MCF 10A (cell line): ENCODE measurements at regions of chr10 and their contacts with region 1.

Region 1: DNA sequence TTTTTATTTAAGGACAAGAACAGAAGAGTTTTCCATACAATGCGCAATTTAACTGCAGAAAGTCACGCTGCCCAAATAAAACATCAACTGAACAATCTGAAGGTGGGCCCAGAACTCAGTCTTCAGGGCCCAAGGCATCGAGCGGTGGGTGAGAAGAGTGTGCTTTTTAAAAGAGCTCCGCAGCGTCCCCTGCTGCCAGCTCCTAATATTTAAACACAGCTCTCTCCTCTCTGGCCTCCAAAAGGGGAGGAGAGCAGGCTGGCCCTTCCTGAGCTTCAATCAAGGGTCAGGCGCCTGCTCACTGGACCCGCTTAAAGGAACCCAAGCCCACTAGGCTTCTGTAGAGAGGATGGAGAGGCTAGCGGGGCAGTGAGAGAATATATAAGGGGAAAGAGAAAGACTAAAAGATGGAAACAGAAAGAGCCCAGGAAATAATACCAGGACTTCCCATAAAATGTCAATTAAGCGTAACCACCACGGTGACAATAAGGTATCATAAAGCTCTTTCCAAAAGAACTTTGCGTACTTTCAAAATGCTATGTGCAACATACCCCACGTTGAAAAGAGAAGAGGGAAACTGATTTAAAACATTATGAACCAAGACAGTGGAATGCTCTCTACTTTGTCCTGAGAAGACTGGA is 2.8 kb downstream of the FAM53B start:
- DNase-seq: peak; percentile 86
- H3K4me3 Mint-ChIP-seq: peak overlapping the region; percentile 85
- H3K27ac Mint-ChIP-seq: peak overlapping the region; percentile 73
- H3K4me1 Mint-ChIP-seq: peaks cover 48% of the 10 kb centered on the region
- H3K27me3 Mint-ChIP-seq: no peaks in the 10 kb centered on the region
- CTCF ChIP-seq: peak; percentile 79

Region 2: GRCh38 chr10:124530215-124530665 is 211.2 kb before region 1 on chr10:
- CTCF ChIA-PET with region 1: interaction called, 42 read pairs
- POLR2A ChIA-PET with region 1: interaction called, 30 read pairs
- intact Hi-C with region 1: loop called (anchors 1 kb)
- DNase-seq: peak; percentile 86
- H3K4me3 Mint-ChIP-seq: no peak overlapping the region
- H3K27ac Mint-ChIP-seq: no peak overlapping the region
- H3K4me1 Mint-ChIP-seq: peaks cover 13% of the 10 kb centered on the region
- H3K27me3 Mint-ChIP-seq: no peaks in the 10 kb centered on the region
- CTCF ChIP-seq: peak; percentile 91

Region 3: GRCh38 chr10:124545351-124546054 is 195.9 kb before region 1 on chr10:
- CTCF ChIA-PET with region 1: interaction called, 45 read pairs
- POLR2A ChIA-PET with region 1: interaction called, 3 read pairs
- intact Hi-C with region 1: loop called (anchors 1 kb)
- DNase-seq: no peak
- H3K4me3 Mint-ChIP-seq: no peak overlapping the region
- H3K27ac Mint-ChIP-seq: no peak overlapping the region
- H3K4me1 Mint-ChIP-seq: no peaks in the 10 kb centered on the region
- H3K27me3 Mint-ChIP-seq: no peaks in the 10 kb centered on the region
- CTCF ChIP-seq: no peak

Region 4: GRCh38 chr10:124568848-124569622 is 172.4 kb before region 1 on chr10:
- CTCF ChIA-PET with region 1: no interaction called
- POLR2A ChIA-PET with region 1: no interaction called
- intact Hi-C with region 1: no loop called
- DNase-seq: no peak
- H3K4me3 Mint-ChIP-seq: no peak overlapping the region
- H3K27ac Mint-ChIP-seq: no peak overlapping the region
- H3K4me1 Mint-ChIP-seq: no peaks in the 10 kb centered on the region
- H3K27me3 Mint-ChIP-seq: no peaks in the 10 kb centered on the region
- CTCF ChIP-seq: no peak

Region 5: GRCh38 chr10:124647421-124648130 is 93.8 kb before region 1 on chr10:
- CTCF ChIA-PET with region 1: interaction called, 7 read pairs
- POLR2A ChIA-PET with region 1: interaction called, 10 read pairs
- intact Hi-C with region 1: loop called (anchors 5 kb)
- DNase-seq: peak; percentile 52
- H3K4me3 Mint-ChIP-seq: no peak overlapping the region
- H3K27ac Mint-ChIP-seq: no peak overlapping the region
- H3K4me1 Mint-ChIP-seq: peaks cover 26% of the 10 kb centered on the region
- H3K27me3 Mint-ChIP-seq: no peaks in the 10 kb centered on the region
- CTCF ChIP-seq: no peak

Region 6: DNA sequence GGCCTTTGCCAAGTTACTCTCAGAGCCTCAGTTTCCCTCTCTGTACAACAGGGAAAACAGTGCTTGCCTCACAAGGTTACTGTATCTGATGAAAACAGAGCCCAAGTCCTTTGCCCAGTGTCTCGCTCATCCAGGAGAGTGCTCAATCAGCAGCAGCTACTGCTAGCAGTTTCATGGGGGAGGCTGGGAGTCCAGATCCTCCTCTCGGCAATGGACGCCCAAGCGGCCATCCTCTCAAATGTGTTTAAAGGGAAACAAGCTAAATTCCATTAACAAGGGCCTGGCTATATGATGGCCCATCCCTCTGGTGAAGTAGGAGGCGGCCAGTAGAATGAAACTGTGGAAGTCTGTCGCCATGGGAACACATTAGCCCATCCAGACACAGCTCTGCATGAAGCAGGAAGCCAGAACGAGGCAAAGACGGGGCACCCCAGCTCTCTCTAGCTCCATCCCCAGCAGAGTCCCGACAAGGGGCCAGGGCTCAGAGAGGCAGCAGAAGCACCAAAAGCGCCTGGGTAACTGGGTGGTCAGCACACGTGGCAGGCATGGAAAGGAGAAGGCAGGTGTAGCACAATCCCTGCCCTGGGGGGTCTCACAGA is 32.4 kb before region 1 on chr10:
- CTCF ChIA-PET with region 1: interaction called, 25 read pairs
- POLR2A ChIA-PET with region 1: interaction called, 21 read pairs
- intact Hi-C with region 1: loop called (anchors 5 kb)
- DNase-seq: no peak
- H3K4me3 Mint-ChIP-seq: peak overlapping the region; percentile 30
- H3K27ac Mint-ChIP-seq: peak overlapping the region; percentile 81
- H3K4me1 Mint-ChIP-seq: peaks cover 31% of the 10 kb centered on the region
- H3K27me3 Mint-ChIP-seq: no peaks in the 10 kb centered on the region
- CTCF ChIP-seq: no peak

Region 7: GRCh38 chr10:124755581-124755980 is 14.2 kb after region 1 on chr10:
- CTCF ChIA-PET with region 1: interaction called, 13 read pairs
- POLR2A ChIA-PET with region 1: interaction called, 8 read pairs
- intact Hi-C with region 1: no loop called
- DNase-seq: no peak
- H3K4me3 Mint-ChIP-seq: no peak overlapping the region
- H3K27ac Mint-ChIP-seq: no peak overlapping the region
- H3K4me1 Mint-ChIP-seq: no peaks in the 10 kb centered on the region
- H3K27me3 Mint-ChIP-seq: no peaks in the 10 kb centered on the region
- CTCF ChIP-seq: no peak

Region 8: DNA sequence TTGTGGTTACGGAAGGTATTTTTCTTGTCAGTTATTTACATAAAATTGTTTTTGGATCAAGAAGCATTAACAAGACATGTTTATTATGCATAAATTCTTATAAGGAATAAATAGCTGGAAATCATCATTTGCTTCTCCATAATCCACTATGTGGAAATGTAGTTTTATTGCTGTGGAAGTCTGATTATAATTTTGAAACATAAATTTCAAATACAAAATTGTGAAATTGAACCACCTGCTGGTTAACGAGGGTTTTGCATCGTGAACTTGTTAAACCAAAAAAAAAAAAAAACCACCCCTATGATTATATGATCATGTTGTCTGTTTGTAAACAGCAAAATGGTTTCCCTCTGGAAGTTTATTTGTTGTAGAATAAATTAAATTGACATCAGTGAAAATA is 86.1 kb after region 1 on chr10:
- CTCF ChIA-PET with region 1: interaction called, 4 read pairs
- POLR2A ChIA-PET with region 1: no interaction called
- intact Hi-C with region 1: loop called (anchors 1 kb)
- DNase-seq: peak; percentile 30
- H3K4me3 Mint-ChIP-seq: no peak overlapping the region
- H3K27ac Mint-ChIP-seq: no peak overlapping the region
- H3K4me1 Mint-ChIP-seq: no peaks in the 10 kb centered on the region
- H3K27me3 Mint-ChIP-seq: no peaks in the 10 kb centered on the region
- CTCF ChIP-seq: peak; percentile 46

Region 9: GRCh38 chr10:125103924-125104323 is 362.5 kb after region 1 on chr10:
- CTCF ChIA-PET with region 1: no interaction called
- POLR2A ChIA-PET with region 1: no interaction called
- intact Hi-C with region 1: no loop called
- DNase-seq: no peak
- H3K4me3 Mint-ChIP-seq: no peak overlapping the region
- H3K27ac Mint-ChIP-seq: no peak overlapping the region
- H3K4me1 Mint-ChIP-seq: peaks cover 25% of the 10 kb centered on the region
- H3K27me3 Mint-ChIP-seq: no peaks in the 10 kb centered on the region
- CTCF ChIP-seq: no peak

Region 10: DNA sequence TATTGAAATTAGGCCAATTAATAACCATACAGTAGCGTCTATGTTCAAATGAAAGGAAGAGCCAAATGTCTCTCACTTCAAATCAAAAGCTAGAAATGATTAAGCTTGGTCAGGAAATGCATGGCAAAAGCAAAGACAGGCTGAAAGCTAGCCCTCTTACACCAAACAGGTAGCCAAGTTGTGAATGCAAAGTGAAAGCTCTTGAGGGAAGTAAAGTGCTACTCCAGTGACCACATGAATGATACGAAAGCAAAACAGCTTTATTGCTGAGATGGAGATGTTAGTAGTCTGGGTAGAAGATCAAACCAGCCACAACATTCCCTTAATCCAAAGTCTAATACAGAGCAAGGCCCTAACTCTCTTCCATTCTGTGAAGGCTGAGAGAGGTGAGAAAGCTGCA is 817.8 kb after region 1 on chr10:
- CTCF ChIA-PET with region 1: no interaction called
- POLR2A ChIA-PET with region 1: no interaction called
- intact Hi-C with region 1: no loop called
- DNase-seq: no peak
- H3K4me3 Mint-ChIP-seq: no peak overlapping the region
- H3K27ac Mint-ChIP-seq: no peak overlapping the region
- H3K4me1 Mint-ChIP-seq: no peaks in the 10 kb centered on the region
- H3K27me3 Mint-ChIP-seq: peaks cover 70% of the 10 kb centered on the region
- CTCF ChIP-seq: no peak